ENCODE measurements at regions of chr10 and their contacts with region 1.

Region 1: GRCh38 chr10:89217057-89217990 is 10.2 kb upstream of the CH25H start:
- DNase-seq: peak; percentile 59 to 64 (median 61)
- H3K4me3 ChIP-seq: no peak overlapping the region
- H3K4me3 Mint-ChIP-seq: peak overlapping the region in 2 of 8 donors; percentile 29 to 67
- H3K27ac ChIP-seq: peak overlapping the region; percentile 33
- H3K27ac Mint-ChIP-seq: peak overlapping the region in 4 of 7 donors; percentile 4 to 90 (median 70)
- H3K4me1 ChIP-seq: peaks cover 7% of the 10 kb centered on the region
- H3K4me1 Mint-ChIP-seq: peaks cover 9 to 11% (median 10%) of the 10 kb centered on the region in 4 donors
- H3K27me3 ChIP-seq: no peaks in the 10 kb centered on the region
- H3K27me3 Mint-ChIP-seq: no peaks in the 10 kb centered on the region

Region 2: GRCh38 chr10:89029785-89030437 is 187.4 kb before region 1 on chr10:
- CTCF ChIA-PET with region 1: interaction called, 92 read pairs
- POLR2A ChIA-PET with region 1: interaction called, 5 read pairs
- intact Hi-C with region 1: loop called (anchors 1 kb)
- DNase-seq: peak; percentile 48 to 63 (median 59)
- H3K4me3 ChIP-seq: no peak overlapping the region
- H3K4me3 Mint-ChIP-seq: peak overlapping the region in 1 of 8 donors; percentile 17
- H3K27ac ChIP-seq: no peak overlapping the region
- H3K27ac Mint-ChIP-seq: peak overlapping the region in 2 of 7 donors; percentile 5 to 42
- H3K4me1 ChIP-seq: peaks cover 4% of the 10 kb centered on the region
- H3K4me1 Mint-ChIP-seq: peaks cover 7 to 14% (median 9%) of the 10 kb centered on the region in 4 donors
- H3K27me3 ChIP-seq: no peaks in the 10 kb centered on the region
- H3K27me3 Mint-ChIP-seq: no peaks in the 10 kb centered on the region

Region 3: GRCh38 chr10:89053555-89053954 is 163.8 kb before region 1 on chr10:
- CTCF ChIA-PET with region 1: interaction called, 11 read pairs
- POLR2A ChIA-PET with region 1: no interaction called
- intact Hi-C with region 1: no loop called
- DNase-seq: no peak
- H3K4me3 ChIP-seq: no peak overlapping the region
- H3K4me3 Mint-ChIP-seq: no peak overlapping the region
- H3K27ac ChIP-seq: no peak overlapping the region
- H3K27ac Mint-ChIP-seq: no peak overlapping the region
- H3K4me1 ChIP-seq: no peaks in the 10 kb centered on the region
- H3K4me1 Mint-ChIP-seq: no peaks in the 10 kb centered on the region
- H3K27me3 ChIP-seq: no peaks in the 10 kb centered on the region
- H3K27me3 Mint-ChIP-seq: no peaks in the 10 kb centered on the region

Region 4: GRCh38 chr10:89207181-89207800 is 10.0 kb before region 1 on chr10 and contains the start of gene CH25H:
- CTCF ChIA-PET with region 1: interaction called, 47 read pairs
- POLR2A ChIA-PET with region 1: interaction called, 4 read pairs
- intact Hi-C with region 1: no loop called
- DNase-seq: peak; percentile 31 to 59 (median 41)
- H3K4me3 ChIP-seq: peak within 1 kb of the TSS; percentile 43 to 55
- H3K4me3 Mint-ChIP-seq: peak within 1 kb of the TSS; percentile 84 to 95 (median 87)
- H3K27ac ChIP-seq: no peak within 1 kb of the TSS
- H3K27ac Mint-ChIP-seq: peak within 1 kb of the TSS; percentile 6 to 83 (median 71)
- H3K4me1 ChIP-seq: peaks cover 17% of the 10 kb centered on the region
- H3K4me1 Mint-ChIP-seq: peaks cover 9 to 15% (median 13%) of the 10 kb centered on the region in 4 donors
- H3K27me3 ChIP-seq: peaks cover 6% of the 10 kb centered on the region
- H3K27me3 Mint-ChIP-seq: peaks cover 18 to 23% of the 10 kb centered on the region in 2 donors
- total RNA-seq, gene CH25H: not detected

Region 5: DNA sequence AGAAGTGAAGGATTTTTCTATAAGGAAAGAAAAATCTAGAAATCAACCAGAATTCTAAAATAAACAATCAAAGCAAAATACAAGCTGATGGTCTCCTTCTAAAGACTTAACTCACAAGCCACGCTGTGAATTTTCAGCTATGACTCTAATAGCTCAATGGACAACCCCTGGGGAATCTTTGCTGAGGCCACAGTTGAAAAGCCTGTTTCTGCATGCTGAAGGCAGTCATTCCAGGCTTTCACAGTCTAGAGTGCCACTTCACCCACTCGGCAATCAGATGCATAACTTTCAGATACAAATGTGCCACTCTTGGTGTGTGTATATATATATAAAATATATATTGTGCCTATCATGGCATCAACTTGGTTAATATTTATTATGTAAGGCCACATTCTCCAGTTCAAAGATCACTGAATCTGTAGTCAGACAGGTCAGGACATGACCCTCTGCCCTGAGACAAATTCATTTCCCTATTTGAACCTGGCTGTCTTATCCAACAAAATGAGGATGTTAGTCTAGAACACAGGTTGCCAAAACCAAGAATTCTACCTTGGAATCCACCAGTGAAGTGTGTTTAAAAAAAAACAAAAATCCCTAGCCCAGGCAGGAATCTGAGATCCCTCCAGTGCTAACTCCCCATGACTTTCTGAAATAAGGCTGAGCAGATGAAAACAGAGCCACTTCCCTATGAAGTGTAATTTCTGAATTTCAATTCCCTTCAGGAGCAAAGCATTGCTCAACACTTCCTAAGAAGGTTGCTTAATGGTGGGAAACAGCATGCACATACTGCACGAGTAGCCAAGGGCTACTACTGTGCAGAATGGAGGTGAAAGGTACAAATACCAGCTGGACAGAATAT is 24.4 kb after region 1 on chr10:
- CTCF ChIA-PET with region 1: interaction called, 11 read pairs
- POLR2A ChIA-PET with region 1: no interaction called
- intact Hi-C with region 1: no loop called
- DNase-seq: no peak
- H3K4me3 ChIP-seq: no peak overlapping the region
- H3K4me3 Mint-ChIP-seq: no peak overlapping the region
- H3K27ac ChIP-seq: no peak overlapping the region
- H3K27ac Mint-ChIP-seq: no peak overlapping the region
- H3K4me1 ChIP-seq: peaks cover 3% of the 10 kb centered on the region
- H3K4me1 Mint-ChIP-seq: peaks cover 0 to 11% (median 7%) of the 10 kb centered on the region in 4 donors
- H3K27me3 ChIP-seq: no peaks in the 10 kb centered on the region
- H3K27me3 Mint-ChIP-seq: no peaks in the 10 kb centered on the region

Region 6: GRCh38 chr10:89391917-89392756 is 174.8 kb after region 1 on chr10 and contains the start of gene IFIT1:
- CTCF ChIA-PET with region 1: interaction called, 6 read pairs
- POLR2A ChIA-PET with region 1: no interaction called
- intact Hi-C with region 1: loop called (anchors 1 kb)
- DNase-seq: peak; percentile 57 to 81 (median 79)
- H3K4me3 ChIP-seq: peak within 1 kb of the TSS; percentile 69 to 82
- H3K4me3 Mint-ChIP-seq: peak within 1 kb of the TSS; percentile 85 to 97 (median 94)
- H3K27ac ChIP-seq: peak within 1 kb of the TSS; percentile 68
- H3K27ac Mint-ChIP-seq: peak within 1 kb of the TSS; percentile 76 to 98 (median 95)
- H3K4me1 ChIP-seq: peaks cover 31% of the 10 kb centered on the region
- H3K4me1 Mint-ChIP-seq: peaks cover 13 to 35% (median 31%) of the 10 kb centered on the region in 4 donors
- H3K27me3 ChIP-seq: no peaks in the 10 kb centered on the region
- H3K27me3 Mint-ChIP-seq: no peaks in the 10 kb centered on the region
- total RNA-seq, gene IFIT1: 5.1 to 6.3 TPM

Measured in CD4-positive, alpha-beta memory T cell (primary cell).